Endothelial cell of umbilical vein (primary cell): ENCODE measurements at regions of chr3 and their contacts with region 1.

Region 1: DNA sequence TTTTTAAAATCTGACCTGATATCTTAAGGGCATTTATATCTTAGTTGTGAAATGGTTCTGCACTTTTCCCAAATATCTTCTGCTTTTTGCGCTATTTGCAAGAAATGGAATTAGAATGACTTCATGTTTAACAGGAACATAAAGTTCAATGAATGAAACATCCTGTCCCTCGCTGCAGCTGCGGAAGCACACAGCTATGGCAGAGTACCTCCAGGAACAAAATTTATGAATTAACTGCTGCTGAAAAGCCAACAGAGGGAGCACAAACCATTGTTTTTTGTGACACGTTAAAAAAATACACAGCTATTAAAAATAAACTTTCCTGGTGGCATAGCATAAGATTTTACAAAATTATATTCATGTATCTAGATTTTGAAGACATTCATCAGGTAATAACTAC is 404.4 kb upstream of the MDFIC2 start:
- DNase-seq: peak; percentile 86
- H3K4me3 ChIP-seq: no peak overlapping the region
- H3K27ac ChIP-seq: no peak overlapping the region
- H3K4me1 ChIP-seq: peaks cover 5% of the 10 kb centered on the region
- H3K27me3 ChIP-seq: no peaks in the 10 kb centered on the region
- CTCF ChIP-seq: peak; percentile 17 to 46
- POLR2A ChIP-seq: no peak

Region 2: GRCh38 chr3:70789898-70790297 is 73.1 kb after region 1 on chr3:
- CTCF ChIA-PET with region 1: no interaction called
- POLR2A ChIA-PET with region 1: no interaction called
- dilution Hi-C with region 1: no loop called
- intact Hi-C with region 1: no loop called
- DNase-seq: no peak
- H3K4me3 ChIP-seq: no peak overlapping the region
- H3K27ac ChIP-seq: no peak overlapping the region
- H3K4me1 ChIP-seq: no peaks in the 10 kb centered on the region
- H3K27me3 ChIP-seq: no peaks in the 10 kb centered on the region
- CTCF ChIP-seq: no peak
- POLR2A ChIP-seq: no peak

Region 3: GRCh38 chr3:70951316-70951715 is 234.5 kb after region 1 on chr3:
- CTCF ChIA-PET with region 1: interaction called, 20 read pairs
- POLR2A ChIA-PET with region 1: no interaction called
- dilution Hi-C with region 1: no loop called
- intact Hi-C with region 1: loop called (anchors 5 kb)
- DNase-seq: no peak
- H3K4me3 ChIP-seq: no peak overlapping the region
- H3K27ac ChIP-seq: no peak overlapping the region
- H3K4me1 ChIP-seq: no peaks in the 10 kb centered on the region
- H3K27me3 ChIP-seq: no peaks in the 10 kb centered on the region
- CTCF ChIP-seq: no peak
- POLR2A ChIP-seq: no peak

Region 4: GRCh38 chr3:70999730-71000129 is 282.9 kb after region 1 on chr3:
- CTCF ChIA-PET with region 1: interaction called, 12 read pairs
- POLR2A ChIA-PET with region 1: no interaction called
- dilution Hi-C with region 1: no loop called
- intact Hi-C with region 1: no loop called
- DNase-seq: peak; percentile 73
- H3K4me3 ChIP-seq: no peak overlapping the region
- H3K27ac ChIP-seq: peak overlapping the region; percentile 32
- H3K4me1 ChIP-seq: peaks cover 10% of the 10 kb centered on the region
- H3K27me3 ChIP-seq: no peaks in the 10 kb centered on the region
- CTCF ChIP-seq: no peak
- POLR2A ChIP-seq: no peak

Region 5: GRCh38 chr3:71057526-71057894 is 340.7 kb after region 1 on chr3:
- CTCF ChIA-PET with region 1: interaction called, 12 read pairs
- POLR2A ChIA-PET with region 1: no interaction called
- dilution Hi-C with region 1: no loop called
- intact Hi-C with region 1: no loop called
- DNase-seq: peak; percentile 61
- H3K4me3 ChIP-seq: peak overlapping the region in 1 of 3 experiments; percentile 3
- H3K27ac ChIP-seq: peak overlapping the region; percentile 92
- H3K4me1 ChIP-seq: peaks cover 98% of the 10 kb centered on the region
- H3K27me3 ChIP-seq: no peaks in the 10 kb centered on the region
- CTCF ChIP-seq: no peak
- POLR2A ChIP-seq: no peak

Region 6: GRCh38 chr3:71305231-71306206 is 588.7 kb after region 1 on chr3:
- CTCF ChIA-PET with region 1: interaction called, 4 read pairs
- POLR2A ChIA-PET with region 1: no interaction called
- dilution Hi-C with region 1: no loop called
- intact Hi-C with region 1: loop called (anchors 2 kb)
- DNase-seq: peak; percentile 71
- H3K4me3 ChIP-seq: peak overlapping the region; percentile 24 to 60 (median 41)
- H3K27ac ChIP-seq: peak overlapping the region; percentile 19
- H3K4me1 ChIP-seq: peaks cover 24% of the 10 kb centered on the region
- H3K27me3 ChIP-seq: no peaks in the 10 kb centered on the region
- CTCF ChIP-seq: no peak
- POLR2A ChIP-seq: no peak